ENCODE measurements at regions of chr18 and their contacts with region 1.

Region 1: DNA sequence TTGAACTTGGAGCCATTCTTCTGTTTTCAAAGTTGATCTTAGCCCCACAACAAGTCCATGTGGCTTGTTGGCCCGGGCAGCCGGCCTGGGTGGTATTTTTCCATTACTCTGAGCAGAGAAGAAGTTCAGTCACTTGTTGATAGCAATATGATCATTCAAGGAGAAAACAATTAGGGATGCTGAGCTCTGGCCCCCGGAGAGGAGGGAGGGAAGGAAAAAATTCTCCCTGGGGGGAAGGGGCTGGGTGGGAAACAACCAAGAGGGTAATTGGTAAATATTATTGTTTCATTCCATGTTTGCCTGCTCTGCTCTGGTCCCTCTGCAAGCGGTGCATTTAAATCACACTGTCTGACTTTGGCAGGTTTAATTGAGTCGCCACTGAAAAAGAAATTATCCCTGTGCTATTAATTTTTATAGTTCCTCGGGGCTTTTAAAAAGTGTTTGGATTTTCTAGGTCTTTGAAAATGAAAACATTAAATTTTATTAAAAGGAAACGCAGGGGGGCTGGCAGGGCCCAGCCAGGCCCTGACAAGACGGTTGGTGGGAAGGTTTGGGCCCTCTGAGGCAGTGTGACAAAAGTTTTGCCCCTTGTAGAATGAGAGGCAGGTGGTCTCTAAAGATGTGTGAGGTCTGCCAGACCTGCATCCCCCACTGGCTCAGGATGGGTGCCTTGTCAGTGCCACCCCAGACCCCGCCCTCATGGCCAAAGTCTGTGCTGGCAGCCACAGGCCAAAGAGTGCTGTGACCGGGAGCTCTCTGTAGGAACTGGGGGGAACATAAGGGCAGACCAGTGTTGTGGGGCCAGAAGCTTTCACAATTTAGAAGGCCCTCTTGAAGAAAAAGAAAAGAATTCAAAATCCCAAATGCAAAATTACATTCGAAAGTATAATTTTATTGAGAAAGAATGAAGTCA is 52.5 kb upstream of the SLC14A2 start:
- DNase-seq: peak in 1 of 2 donors; percentile 78
- H3K4me3 ChIP-seq: no peak overlapping the region
- H3K27ac ChIP-seq: peak overlapping the region; percentile 84 to 92
- H3K4me1 ChIP-seq: peaks cover 6 to 16% of the 10 kb centered on the region in 2 donors
- H3K27me3 ChIP-seq: no peaks in the 10 kb centered on the region
- CTCF ChIP-seq: no peak

Region 2: GRCh38 chr18:45549290-45549689 is 13.5 kb before region 1 on chr18:
- intact Hi-C with region 1: loop called (anchors 2 kb)
- DNase-seq: peak in 1 of 2 donors; percentile 41
- H3K4me3 ChIP-seq: no peak overlapping the region
- H3K27ac ChIP-seq: no peak overlapping the region
- H3K4me1 ChIP-seq: no peaks in the 10 kb centered on the region
- H3K27me3 ChIP-seq: no peaks in the 10 kb centered on the region
- CTCF ChIP-seq: no peak

Region 3: DNA sequence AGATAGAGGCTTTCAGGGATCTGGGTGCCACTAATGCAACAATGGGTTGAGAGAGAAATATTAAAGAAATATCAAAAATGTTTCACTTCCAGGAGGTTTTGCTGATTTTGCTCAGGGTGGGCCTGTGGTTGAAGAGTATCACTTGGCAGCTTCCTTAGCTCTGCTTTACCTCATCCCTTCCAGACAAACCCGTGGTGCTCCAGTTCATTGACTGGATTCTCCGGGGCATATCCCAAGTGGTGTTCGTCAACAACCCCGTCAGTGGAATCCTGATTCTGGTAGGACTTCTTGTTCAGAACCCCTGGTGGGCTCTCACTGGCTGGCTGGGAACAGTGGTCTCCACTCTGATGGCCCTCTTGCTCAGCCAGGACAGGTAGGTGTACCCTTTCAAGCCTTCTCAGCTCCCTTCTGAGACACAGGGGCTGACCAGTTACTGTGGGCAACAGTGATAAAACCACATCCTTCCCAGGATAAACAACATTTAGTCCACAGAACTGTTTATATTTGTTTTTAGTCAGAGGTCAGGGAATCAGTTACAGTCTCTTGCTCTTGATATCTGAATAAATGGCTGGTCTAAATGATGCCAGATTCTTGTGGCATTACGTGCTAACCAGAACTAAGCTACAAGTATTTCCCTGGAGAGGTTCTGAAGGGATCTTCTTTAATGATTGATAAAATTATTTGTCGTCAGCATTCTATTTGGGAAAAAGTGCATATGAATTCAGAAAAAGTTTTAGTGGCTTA is 168.2 kb after region 1 on chr18:
- intact Hi-C with region 1: no loop called
- DNase-seq: no peak
- H3K4me3 ChIP-seq: no peak overlapping the region
- H3K27ac ChIP-seq: peak overlapping the region in 1 of 2 donors; percentile 14
- H3K4me1 ChIP-seq: no peaks in the 10 kb centered on the region
- H3K27me3 ChIP-seq: no peaks in the 10 kb centered on the region
- CTCF ChIP-seq: no peak